ENCODE measurements at regions of chr5 and their contacts with region 1.

Region 1: DNA sequence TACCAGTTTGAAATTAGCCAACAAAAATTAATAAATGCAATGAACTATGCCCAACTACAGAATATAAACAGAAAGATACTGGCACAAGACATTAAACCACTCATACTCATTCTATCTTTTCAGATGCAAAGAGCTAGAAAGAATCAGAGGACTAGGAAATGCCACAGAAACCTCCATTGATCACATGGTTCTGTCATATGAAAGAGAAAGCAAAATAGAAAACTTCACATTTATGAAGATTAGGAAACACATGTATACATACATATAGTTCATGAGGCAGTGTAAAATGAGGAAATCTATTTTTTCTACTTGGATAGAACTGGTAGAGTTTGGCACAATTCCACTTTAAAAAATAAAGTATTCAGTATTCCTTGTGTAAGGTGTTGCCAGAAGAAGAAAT is 275.1 kb upstream of the PTGER4 start:
- DNase-seq: peak in 7 of 9 donors; percentile 36 to 66 (median 60)
- ATAC-seq: peak; percentile 73
- H3K4me3 ChIP-seq: no peak overlapping the region
- H3K4me3 Mint-ChIP-seq: peak overlapping the region in 9 of 10 donors; percentile 34 to 83 (median 62)
- H3K27ac ChIP-seq: peak overlapping the region; percentile 99
- H3K27ac Mint-ChIP-seq: peak overlapping the region; percentile 95 to 100 (median 99)
- H3K4me1 ChIP-seq: peaks cover 48 to 50% of the 10 kb centered on the region in 2 donors
- H3K4me1 Mint-ChIP-seq: peaks cover 43 to 83% (median 80%) of the 10 kb centered on the region in 7 donors
- H3K27me3 ChIP-seq: no peaks in the 10 kb centered on the region
- H3K27me3 Mint-ChIP-seq: no peaks in the 10 kb centered on the region

Region 2: DNA sequence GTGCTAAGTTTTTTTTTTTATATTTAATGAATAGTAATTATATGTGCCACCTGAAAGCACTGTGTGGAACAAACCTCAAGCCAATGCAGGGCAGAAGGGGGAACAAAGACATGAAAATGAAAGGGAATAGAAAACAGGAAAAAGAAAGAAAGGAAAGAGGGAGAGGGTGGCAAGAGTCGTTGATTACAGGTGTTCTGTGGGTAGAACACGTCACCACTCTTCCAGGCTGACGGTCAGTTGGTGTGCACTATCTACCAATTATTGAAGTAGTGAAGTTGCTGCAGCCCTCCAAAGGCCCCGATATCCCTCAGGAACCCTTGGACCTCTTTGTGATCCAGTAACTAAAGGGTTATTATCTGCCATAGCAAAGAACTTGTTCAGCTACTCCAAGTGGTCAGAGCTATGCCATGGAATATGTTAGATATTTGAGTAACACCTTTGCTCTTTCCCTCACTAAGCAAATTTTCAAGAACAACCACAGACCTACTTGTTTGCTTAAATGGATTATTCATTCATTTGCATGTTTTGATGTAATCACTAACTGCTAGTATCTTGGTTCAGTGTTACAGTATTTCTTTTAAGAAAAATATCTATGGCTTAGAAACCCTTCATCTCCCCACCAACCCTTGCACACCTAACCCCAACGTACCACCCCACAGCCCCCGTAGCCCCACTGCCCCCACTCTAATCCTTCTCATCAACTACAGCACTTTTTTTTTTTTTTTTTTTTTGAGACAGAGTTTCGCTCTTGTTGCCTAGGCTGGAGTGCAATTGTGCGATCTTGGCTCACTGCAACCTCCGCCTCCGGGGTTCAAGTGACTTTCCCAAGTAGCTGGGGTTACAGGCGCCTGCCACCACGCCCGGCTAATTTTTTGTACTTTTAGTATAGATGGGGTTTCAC is 1216.5 kb before region 1 on chr5:
- CTCF ChIA-PET with region 1: no interaction called
- POLR2A ChIA-PET with region 1: no interaction called
- intact Hi-C with region 1: loop called in 1 of 2 experiments (anchors 10 kb)
- DNase-seq: peak in 2 of 9 donors; percentile 46 to 50
- ATAC-seq: peak; percentile 45
- H3K4me3 ChIP-seq: peak overlapping the region; percentile 36
- H3K4me3 Mint-ChIP-seq: peak overlapping the region; percentile 78 to 98 (median 88)
- H3K27ac ChIP-seq: peak overlapping the region; percentile 73
- H3K27ac Mint-ChIP-seq: peak overlapping the region; percentile 92 to 99 (median 98)
- H3K4me1 ChIP-seq: peaks cover 75 to 85% of the 10 kb centered on the region in 2 donors
- H3K4me1 Mint-ChIP-seq: peaks cover 58 to 97% (median 91%) of the 10 kb centered on the region in 7 donors
- H3K27me3 ChIP-seq: no peaks in the 10 kb centered on the region
- H3K27me3 Mint-ChIP-seq: no peaks in the 10 kb centered on the region

Region 3: DNA sequence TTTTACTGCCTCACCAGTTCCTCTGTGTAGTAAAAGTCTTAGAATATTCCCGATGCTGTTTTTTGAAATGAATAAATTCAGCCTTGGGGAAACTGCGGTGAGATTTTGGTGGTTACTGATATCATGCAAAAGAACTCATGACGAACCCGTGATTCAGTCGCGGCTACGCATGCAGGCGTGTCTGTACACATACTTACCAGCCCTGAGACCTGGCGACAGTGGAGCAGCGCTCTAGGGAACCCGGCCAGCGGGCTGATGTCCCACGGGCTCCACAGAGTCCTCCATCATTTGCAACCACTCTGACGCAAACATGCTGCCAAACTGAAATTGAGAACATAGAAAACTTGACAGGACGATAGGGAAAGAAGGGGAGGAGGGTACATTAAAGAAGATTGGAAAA is 664.2 kb before region 1 on chr5:
- CTCF ChIA-PET with region 1: no interaction called
- POLR2A ChIA-PET with region 1: no interaction called
- intact Hi-C with region 1: no loop called
- DNase-seq: no peak
- ATAC-seq: no peak
- H3K4me3 ChIP-seq: no peak overlapping the region
- H3K4me3 Mint-ChIP-seq: no peak overlapping the region
- H3K27ac ChIP-seq: no peak overlapping the region
- H3K27ac Mint-ChIP-seq: no peak overlapping the region
- H3K4me1 ChIP-seq: no peaks in the 10 kb centered on the region
- H3K4me1 Mint-ChIP-seq: no peaks in the 10 kb centered on the region
- H3K27me3 ChIP-seq: no peaks in the 10 kb centered on the region
- H3K27me3 Mint-ChIP-seq: peaks cover 5 to 26% (median 16%) of the 10 kb centered on the region in 5 donors

Region 4: GRCh38 chr5:40277161-40277906 is 127.3 kb before region 1 on chr5:
- CTCF ChIA-PET with region 1: no interaction called
- POLR2A ChIA-PET with region 1: no interaction called
- intact Hi-C with region 1: loop called in 1 of 2 experiments (anchors 2 kb)
- DNase-seq: peak in 2 of 9 donors; percentile 6 to 34
- ATAC-seq: peak; percentile 72
- H3K4me3 ChIP-seq: no peak overlapping the region
- H3K4me3 Mint-ChIP-seq: peak overlapping the region in 9 of 10 donors; percentile 7 to 72 (median 42)
- H3K27ac ChIP-seq: peak overlapping the region; percentile 45
- H3K27ac Mint-ChIP-seq: peak overlapping the region; percentile 66 to 88 (median 76)
- H3K4me1 ChIP-seq: peaks cover 9 to 16% of the 10 kb centered on the region in 2 donors
- H3K4me1 Mint-ChIP-seq: peaks cover 18 to 39% (median 33%) of the 10 kb centered on the region in 7 donors
- H3K27me3 ChIP-seq: no peaks in the 10 kb centered on the region
- H3K27me3 Mint-ChIP-seq: no peaks in the 10 kb centered on the region

Region 5: GRCh38 chr5:40367255-40367654 is 37.4 kb before region 1 on chr5:
- CTCF ChIA-PET with region 1: no interaction called
- POLR2A ChIA-PET with region 1: no interaction called
- intact Hi-C with region 1: loop called in 1 of 2 experiments (anchors 2 kb)
- DNase-seq: peak in 7 of 9 donors; percentile 18 to 53 (median 38)
- ATAC-seq: peak; percentile 54
- H3K4me3 ChIP-seq: no peak overlapping the region
- H3K4me3 Mint-ChIP-seq: no peak overlapping the region
- H3K27ac ChIP-seq: no peak overlapping the region
- H3K27ac Mint-ChIP-seq: peak overlapping the region in 6 of 9 donors; percentile 19 to 86 (median 66)
- H3K4me1 ChIP-seq: peaks cover 0 to under 1% of the 10 kb centered on the region in 2 donors
- H3K4me1 Mint-ChIP-seq: peaks cover 0 to 17% (median 8%) of the 10 kb centered on the region in 7 donors
- H3K27me3 ChIP-seq: no peaks in the 10 kb centered on the region
- H3K27me3 Mint-ChIP-seq: no peaks in the 10 kb centered on the region

Region 6: DNA sequence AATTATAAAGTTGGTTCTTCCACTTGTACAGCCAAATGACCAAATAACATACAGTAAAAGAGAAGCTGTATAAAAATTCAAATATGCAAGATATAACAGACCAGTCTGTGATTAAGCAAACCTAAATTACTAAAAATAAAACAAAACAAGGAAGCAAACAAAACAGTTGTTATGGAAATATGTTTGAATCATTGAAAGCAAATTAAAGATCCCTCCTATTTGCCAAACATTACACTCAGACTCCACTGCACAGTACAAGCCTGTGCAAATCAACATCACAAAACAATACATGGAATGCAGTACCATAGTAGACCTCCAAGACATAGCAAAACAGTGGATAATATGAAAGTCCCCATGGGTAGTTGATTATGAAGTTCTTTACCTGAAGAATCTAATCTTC is 13.0 kb before region 1 on chr5:
- CTCF ChIA-PET with region 1: no interaction called
- POLR2A ChIA-PET with region 1: interaction called, 33 read pairs
- intact Hi-C with region 1: loop called in 1 of 2 experiments (anchors 1 kb)
- DNase-seq: no peak
- ATAC-seq: peak; percentile 69
- H3K4me3 ChIP-seq: no peak overlapping the region
- H3K4me3 Mint-ChIP-seq: no peak overlapping the region
- H3K27ac ChIP-seq: no peak overlapping the region
- H3K27ac Mint-ChIP-seq: peak overlapping the region in 1 of 9 donors; percentile 37
- H3K4me1 ChIP-seq: peaks cover 0 to 35% of the 10 kb centered on the region in 2 donors
- H3K4me1 Mint-ChIP-seq: peaks cover 23 to 41% (median 25%) of the 10 kb centered on the region in 7 donors
- H3K27me3 ChIP-seq: no peaks in the 10 kb centered on the region
- H3K27me3 Mint-ChIP-seq: no peaks in the 10 kb centered on the region

Region 7: DNA sequence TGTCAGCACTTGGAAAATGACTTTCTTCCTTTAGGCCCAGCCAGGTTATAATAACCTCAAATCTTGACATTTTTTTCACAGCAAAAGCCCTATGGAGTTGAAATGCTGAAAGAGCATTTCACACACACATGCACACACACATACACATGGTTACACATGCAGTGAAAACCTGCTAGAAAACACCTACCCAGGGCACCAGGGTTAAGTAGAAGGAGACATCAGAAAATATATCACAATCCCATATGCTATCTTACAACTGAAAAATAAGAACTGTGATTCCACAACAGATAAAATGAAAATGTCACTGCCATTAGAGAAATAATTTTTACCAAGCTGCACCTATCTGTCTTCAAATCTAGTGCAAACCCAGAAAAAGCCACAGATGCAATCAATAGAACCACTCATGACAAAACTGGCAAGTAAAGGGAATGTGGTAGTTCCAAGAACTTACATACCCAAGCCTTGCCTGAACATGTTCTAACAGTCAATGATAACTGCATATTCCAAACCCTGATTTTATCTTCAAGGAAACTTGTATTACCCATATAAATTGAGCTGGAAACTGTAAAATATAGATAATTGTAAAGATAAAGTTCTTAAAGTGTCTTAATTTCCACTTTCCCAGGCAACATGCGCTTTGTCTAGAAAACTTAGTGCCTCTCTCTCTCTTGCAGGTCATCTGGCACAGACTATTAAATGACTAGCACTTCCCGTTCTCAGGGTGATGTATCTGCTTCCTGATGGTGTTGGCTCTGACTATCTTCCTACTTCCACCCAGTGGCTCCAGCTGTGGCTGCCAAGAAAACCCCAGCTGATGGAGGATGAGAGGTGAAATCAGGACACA is 24.9 kb after region 1 on chr5:
- CTCF ChIA-PET with region 1: no interaction called
- POLR2A ChIA-PET with region 1: interaction called, 6 read pairs
- intact Hi-C with region 1: loop called in 1 of 2 experiments (anchors 1 kb)
- DNase-seq: no peak
- ATAC-seq: peak; percentile 78
- H3K4me3 ChIP-seq: no peak overlapping the region
- H3K4me3 Mint-ChIP-seq: peak overlapping the region in 1 of 10 donors; percentile 79
- H3K27ac ChIP-seq: no peak overlapping the region
- H3K27ac Mint-ChIP-seq: peak overlapping the region in 2 of 9 donors; percentile 21 to 91
- H3K4me1 ChIP-seq: peaks cover 0 to 15% of the 10 kb centered on the region in 2 donors
- H3K4me1 Mint-ChIP-seq: peaks cover 5 to 48% (median 19%) of the 10 kb centered on the region in 7 donors
- H3K27me3 ChIP-seq: no peaks in the 10 kb centered on the region
- H3K27me3 Mint-ChIP-seq: no peaks in the 10 kb centered on the region